Natural killer cell (primary cell): ENCODE measurements at regions of chr22 and their contacts with region 1.

Region 1: GRCh38 chr22:41091132-41092022 is 1.0 kb upstream of the EP300 start:
- DNase-seq: peak; percentile 99
- ATAC-seq: peak; percentile 84 to 97 (median 84)
- H3K4me3 ChIP-seq: peak overlapping the region; percentile 89
- H3K4me3 Mint-ChIP-seq: peak overlapping the region; percentile 98
- H3K27ac ChIP-seq: peak overlapping the region; percentile 99
- H3K27ac Mint-ChIP-seq: peak overlapping the region; percentile 93 to 94
- H3K4me1 ChIP-seq: peaks cover 16% of the 10 kb centered on the region
- H3K4me1 Mint-ChIP-seq: peaks cover 37% of the 10 kb centered on the region in 2 donors
- H3K27me3 ChIP-seq: no peaks in the 10 kb centered on the region
- H3K27me3 Mint-ChIP-seq: no peaks in the 10 kb centered on the region
- CTCF ChIP-seq: no peak

Region 2: DNA sequence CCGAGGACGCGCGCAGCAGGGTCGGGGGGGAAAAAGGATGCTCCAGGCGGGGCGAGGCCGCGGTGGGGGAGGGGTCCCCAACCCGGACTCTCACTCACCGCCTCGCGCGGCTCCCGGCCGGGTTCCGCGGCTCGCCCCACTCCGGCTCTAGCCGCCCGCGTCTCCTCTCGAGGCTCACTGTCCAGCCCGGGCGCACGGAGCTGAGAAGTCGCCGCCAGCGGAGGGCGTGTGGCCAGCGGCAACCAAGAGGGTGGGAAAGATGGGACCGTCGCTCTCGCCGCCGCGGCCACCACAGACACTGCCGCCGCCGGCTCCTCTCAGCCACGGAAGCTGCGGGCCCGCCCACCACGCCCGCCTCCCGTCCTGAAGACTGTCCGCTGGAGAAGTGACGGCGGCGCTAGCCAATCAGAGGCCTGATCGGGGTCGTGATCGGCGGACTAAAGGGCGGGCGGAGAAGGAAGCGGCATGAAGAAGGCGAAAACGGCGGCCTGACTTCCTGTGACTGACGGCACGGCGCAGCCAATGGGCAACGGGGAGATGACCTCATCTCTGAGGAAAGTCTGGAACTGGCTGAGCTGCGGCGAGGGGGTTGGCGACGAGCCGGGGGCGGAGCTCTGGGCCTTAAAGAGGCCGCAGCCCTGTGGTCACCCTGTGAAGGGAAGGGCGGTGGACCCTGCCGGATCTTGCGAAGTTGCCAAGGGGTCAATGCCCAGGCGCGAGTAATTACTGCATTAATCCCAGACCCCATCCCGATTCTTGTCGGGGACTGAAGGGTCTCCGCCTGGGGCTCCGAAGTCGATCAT is 454.8 kb before region 1 on chr22 and contains the start of gene MRTFA:
- intact Hi-C with region 1: loop called (anchors 5 kb)
- DNase-seq: peak; percentile 99
- ATAC-seq: peak; percentile 90 to 97 (median 92)
- H3K4me3 ChIP-seq: peak within 1 kb of the TSS; percentile 77
- H3K4me3 Mint-ChIP-seq: peak within 1 kb of the TSS; percentile 95
- H3K27ac ChIP-seq: peak within 1 kb of the TSS; percentile 79
- H3K27ac Mint-ChIP-seq: peak within 1 kb of the TSS; percentile 97
- H3K4me1 ChIP-seq: peaks cover 22% of the 10 kb centered on the region
- H3K4me1 Mint-ChIP-seq: peaks cover 38 to 44% of the 10 kb centered on the region in 2 donors
- H3K27me3 ChIP-seq: no peaks in the 10 kb centered on the region
- H3K27me3 Mint-ChIP-seq: no peaks in the 10 kb centered on the region
- CTCF ChIP-seq: no peak
- total RNA-seq, gene MRTFA: 81.8 to 91.9 (median 83.5) TPM

Region 3: GRCh38 chr22:40856513-40857308 is 234.7 kb before region 1 on chr22 and contains the starts of genes ST13 and XPNPEP3:
- intact Hi-C with region 1: loop called (anchors 5 kb)
- DNase-seq: peak; percentile 96 to 99
- ATAC-seq: peak; percentile 85 to 95 (median 88)
- H3K4me3 ChIP-seq: peak within 1 kb of the TSS; percentile 78
- H3K4me3 Mint-ChIP-seq: peak within 1 kb of the TSS; percentile 98
- H3K27ac ChIP-seq: peak within 1 kb of the TSS; percentile 93
- H3K27ac Mint-ChIP-seq: peak within 1 kb of the TSS; percentile 99 to 100
- H3K4me1 ChIP-seq: peaks cover 14% of the 10 kb centered on the region
- H3K4me1 Mint-ChIP-seq: peaks cover 23 to 31% of the 10 kb centered on the region in 2 donors
- H3K27me3 ChIP-seq: no peaks in the 10 kb centered on the region
- H3K27me3 Mint-ChIP-seq: no peaks in the 10 kb centered on the region
- CTCF ChIP-seq: no peak
- total RNA-seq, gene ST13: 72.2 to 81.9 (median 77.5) TPM
- total RNA-seq, gene XPNPEP3: 14.8 to 17.8 (median 15.1) TPM

Region 4: DNA sequence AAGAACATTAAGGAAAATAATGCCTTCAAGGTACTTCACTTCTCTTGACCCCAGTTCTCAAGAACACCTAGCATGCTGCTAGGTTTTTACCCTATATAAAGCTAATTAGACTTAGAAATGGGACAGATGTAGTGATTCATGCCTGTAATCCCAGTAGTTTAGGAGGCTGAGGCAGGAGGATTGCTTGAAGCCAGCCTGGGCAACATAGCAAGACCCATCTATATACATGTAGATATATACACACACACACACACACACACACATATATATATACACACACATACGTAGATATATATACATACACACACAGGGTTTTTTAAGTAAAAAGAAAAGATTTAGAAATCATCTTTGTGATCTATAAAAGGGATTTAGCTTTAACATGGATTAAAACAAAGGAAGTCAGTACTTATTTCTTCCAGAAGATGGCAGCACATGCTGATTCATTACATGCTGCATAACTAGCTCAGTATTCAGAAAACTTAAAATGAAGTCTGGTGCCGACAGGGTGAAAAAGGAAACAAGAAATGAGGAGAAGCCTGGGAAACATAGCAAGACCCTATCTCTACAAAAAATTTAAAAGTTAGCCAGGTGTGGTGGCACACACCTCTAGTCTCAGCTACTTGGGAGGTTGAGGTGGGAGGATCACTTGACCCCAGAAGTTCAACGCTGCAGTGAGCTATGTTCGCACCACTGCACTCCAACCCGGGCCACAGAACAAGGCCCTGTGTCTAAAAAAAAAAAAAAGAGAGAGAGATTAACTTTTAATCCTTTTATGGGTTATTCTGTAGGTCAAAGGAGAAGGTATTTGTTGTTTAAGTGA is 168.7 kb before region 1 on chr22:
- intact Hi-C with region 1: loop called (anchors 10 kb)
- DNase-seq: peak in 1 of 2 donors; percentile 85
- ATAC-seq: peak; percentile 79 to 96 (median 88)
- H3K4me3 ChIP-seq: no peak overlapping the region
- H3K4me3 Mint-ChIP-seq: no peak overlapping the region
- H3K27ac ChIP-seq: no peak overlapping the region
- H3K27ac Mint-ChIP-seq: peak overlapping the region; percentile 37 to 68
- H3K4me1 ChIP-seq: peaks cover 3% of the 10 kb centered on the region
- H3K4me1 Mint-ChIP-seq: peaks cover 4 to 8% of the 10 kb centered on the region in 2 donors
- H3K27me3 ChIP-seq: no peaks in the 10 kb centered on the region
- H3K27me3 Mint-ChIP-seq: no peaks in the 10 kb centered on the region
- CTCF ChIP-seq: peak; percentile 79

Region 5: GRCh38 chr22:40950962-40951794 is 140.2 kb before region 1 on chr22 and contains the start of gene RBX1:
- intact Hi-C with region 1: loop called (anchors 1 kb)
- DNase-seq: peak; percentile 98 to 100
- ATAC-seq: peak; percentile 81 to 94 (median 81)
- H3K4me3 ChIP-seq: peak within 1 kb of the TSS; percentile 98
- H3K4me3 Mint-ChIP-seq: peak within 1 kb of the TSS; percentile 99
- H3K27ac ChIP-seq: peak within 1 kb of the TSS; percentile 99
- H3K27ac Mint-ChIP-seq: peak within 1 kb of the TSS; percentile 98 to 100
- H3K4me1 ChIP-seq: peaks cover 23% of the 10 kb centered on the region
- H3K4me1 Mint-ChIP-seq: peaks cover 22 to 31% of the 10 kb centered on the region in 2 donors
- H3K27me3 ChIP-seq: no peaks in the 10 kb centered on the region
- H3K27me3 Mint-ChIP-seq: no peaks in the 10 kb centered on the region
- CTCF ChIP-seq: no peak
- total RNA-seq, gene RBX1: 27.1 to 34.3 (median 28.5) TPM

Region 6: DNA sequence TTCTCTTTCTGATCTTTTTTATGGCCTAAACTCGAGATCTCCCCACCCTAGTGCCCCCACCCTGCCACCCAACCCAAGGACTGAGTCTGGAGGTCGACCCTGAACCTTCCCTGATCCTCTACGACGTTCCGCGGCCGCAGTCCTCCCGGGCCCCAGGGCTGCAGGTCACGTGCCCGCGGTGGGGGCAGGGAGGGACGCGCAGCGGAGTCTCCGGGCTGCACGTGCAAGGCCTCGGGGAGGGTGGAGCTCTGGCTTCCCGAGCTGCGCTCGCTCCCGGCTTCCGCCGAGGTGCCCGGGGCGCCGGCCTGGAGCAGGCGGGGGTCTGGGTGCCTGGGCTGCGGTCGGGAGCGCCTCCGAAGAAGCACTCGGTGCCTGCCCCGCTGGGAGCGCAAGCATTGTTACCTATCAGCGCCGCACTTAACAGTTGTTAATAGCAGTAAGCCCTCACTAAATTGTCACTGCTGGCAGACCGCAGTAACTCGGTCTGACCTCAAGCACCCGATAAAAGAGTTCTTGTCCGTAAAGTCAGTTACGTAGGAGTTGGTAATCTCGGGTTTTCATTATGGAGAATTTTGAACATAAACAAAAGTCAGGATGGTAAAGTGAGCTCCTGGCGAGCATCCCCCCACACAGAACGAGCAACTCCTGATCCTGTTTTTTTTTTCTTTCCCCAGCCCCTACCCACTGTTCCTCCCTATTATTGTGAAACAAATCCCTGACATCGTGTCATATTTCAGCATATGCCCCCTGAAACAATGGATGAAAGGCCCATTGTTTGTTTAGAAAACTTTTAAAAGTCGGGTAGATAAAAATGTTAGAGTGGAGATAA is 68.7 kb before region 1 on chr22:
- intact Hi-C with region 1: loop called (anchors 5 kb)
- DNase-seq: peak; percentile 64 to 88
- ATAC-seq: peak; percentile 78 to 81 (median 80)
- H3K4me3 ChIP-seq: peak overlapping the region; percentile 52
- H3K4me3 Mint-ChIP-seq: peak overlapping the region; percentile 42
- H3K27ac ChIP-seq: peak overlapping the region; percentile 65
- H3K27ac Mint-ChIP-seq: peak overlapping the region in 1 of 2 donors; percentile 78
- H3K4me1 ChIP-seq: peaks cover 15% of the 10 kb centered on the region
- H3K4me1 Mint-ChIP-seq: peaks cover 0 to 12% of the 10 kb centered on the region in 2 donors
- H3K27me3 ChIP-seq: peaks cover 3% of the 10 kb centered on the region
- H3K27me3 Mint-ChIP-seq: peaks cover 20 to 24% of the 10 kb centered on the region in 2 donors
- CTCF ChIP-seq: no peak

Region 7: DNA sequence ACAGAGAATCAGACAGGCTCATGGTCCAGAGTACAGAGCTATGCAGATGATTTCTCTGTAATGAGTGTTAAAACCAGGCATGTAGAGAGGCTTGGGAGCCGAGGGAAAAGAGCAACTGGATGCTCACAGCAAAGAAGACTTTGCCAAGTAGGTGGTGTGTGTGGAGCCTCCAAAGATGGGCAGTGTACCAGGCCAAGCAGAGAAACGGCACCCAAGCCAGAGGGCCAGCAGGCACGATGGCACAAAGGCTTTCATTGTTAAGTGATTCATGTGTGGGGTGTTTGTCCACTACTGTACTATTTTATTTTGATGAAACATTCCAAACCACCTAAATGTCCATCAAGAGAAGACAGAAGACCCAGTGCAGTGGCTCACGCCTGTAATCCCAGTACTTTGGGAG is 183.5 kb after region 1 on chr22:
- intact Hi-C with region 1: no loop called
- DNase-seq: no peak
- ATAC-seq: no peak
- H3K4me3 ChIP-seq: no peak overlapping the region
- H3K4me3 Mint-ChIP-seq: no peak overlapping the region
- H3K27ac ChIP-seq: no peak overlapping the region
- H3K27ac Mint-ChIP-seq: no peak overlapping the region
- H3K4me1 ChIP-seq: no peaks in the 10 kb centered on the region
- H3K4me1 Mint-ChIP-seq: peaks cover 0 to 4% of the 10 kb centered on the region in 2 donors
- H3K27me3 ChIP-seq: no peaks in the 10 kb centered on the region
- H3K27me3 Mint-ChIP-seq: no peaks in the 10 kb centered on the region
- CTCF ChIP-seq: no peak

Region 8: DNA sequence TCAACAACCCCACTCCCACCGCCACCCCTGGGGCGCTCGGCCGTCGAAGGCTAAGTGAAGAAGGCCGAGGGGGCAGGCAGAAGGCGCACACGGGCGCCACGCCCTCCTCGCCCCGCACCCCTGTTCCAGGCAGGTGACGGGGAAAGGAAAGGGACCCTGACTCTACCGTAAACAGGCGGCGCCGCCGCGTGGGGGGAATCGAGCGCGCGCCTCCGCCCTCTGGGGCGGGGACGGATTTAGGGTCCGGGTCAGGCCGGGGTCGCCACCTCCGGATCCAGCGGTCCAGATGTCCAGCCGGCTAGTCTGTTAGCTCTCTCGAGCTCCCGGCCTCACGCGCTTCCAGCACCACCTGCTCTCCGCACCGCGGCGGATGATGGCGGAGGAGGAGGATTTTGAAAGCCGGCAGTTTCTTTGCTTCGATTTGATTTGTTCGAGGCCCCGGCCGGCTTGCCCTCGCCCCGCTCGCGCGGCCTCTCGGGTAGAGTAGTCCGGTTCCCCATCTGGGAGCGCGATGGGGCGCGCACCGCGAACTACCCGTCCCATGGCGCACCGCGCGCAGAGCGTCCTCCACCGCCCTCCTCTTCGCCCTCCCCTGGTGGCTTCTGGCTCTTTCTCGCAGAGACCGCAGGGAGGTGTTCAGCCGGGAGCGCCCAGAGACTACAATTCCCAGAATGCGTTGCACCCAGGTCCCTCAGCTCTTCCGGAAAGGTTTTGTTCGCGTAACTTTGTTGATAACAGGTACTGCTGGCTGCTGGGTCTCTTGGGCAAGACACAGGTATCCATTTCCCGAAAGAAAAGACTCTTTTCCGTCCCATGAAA is 194.7 kb after region 1 on chr22 and contains the start of gene RANGAP1:
- intact Hi-C with region 1: loop called (anchors 1 kb)
- DNase-seq: peak; percentile 95 to 99
- ATAC-seq: peak; percentile 93 to 98 (median 93)
- H3K4me3 ChIP-seq: peak within 1 kb of the TSS; percentile 86
- H3K4me3 Mint-ChIP-seq: peak within 1 kb of the TSS; percentile 93
- H3K27ac ChIP-seq: peak within 1 kb of the TSS; percentile 86
- H3K27ac Mint-ChIP-seq: peak within 1 kb of the TSS; percentile 96
- H3K4me1 ChIP-seq: peaks cover 15% of the 10 kb centered on the region
- H3K4me1 Mint-ChIP-seq: peaks cover 24 to 39% of the 10 kb centered on the region in 2 donors
- H3K27me3 ChIP-seq: no peaks in the 10 kb centered on the region
- H3K27me3 Mint-ChIP-seq: no peaks in the 10 kb centered on the region
- CTCF ChIP-seq: no peak
- total RNA-seq, gene RANGAP1: 44.0 to 54.2 (median 54.0) TPM